ENCODE measurements at regions of chr5 and their contacts with region 1.

Region 1: DNA sequence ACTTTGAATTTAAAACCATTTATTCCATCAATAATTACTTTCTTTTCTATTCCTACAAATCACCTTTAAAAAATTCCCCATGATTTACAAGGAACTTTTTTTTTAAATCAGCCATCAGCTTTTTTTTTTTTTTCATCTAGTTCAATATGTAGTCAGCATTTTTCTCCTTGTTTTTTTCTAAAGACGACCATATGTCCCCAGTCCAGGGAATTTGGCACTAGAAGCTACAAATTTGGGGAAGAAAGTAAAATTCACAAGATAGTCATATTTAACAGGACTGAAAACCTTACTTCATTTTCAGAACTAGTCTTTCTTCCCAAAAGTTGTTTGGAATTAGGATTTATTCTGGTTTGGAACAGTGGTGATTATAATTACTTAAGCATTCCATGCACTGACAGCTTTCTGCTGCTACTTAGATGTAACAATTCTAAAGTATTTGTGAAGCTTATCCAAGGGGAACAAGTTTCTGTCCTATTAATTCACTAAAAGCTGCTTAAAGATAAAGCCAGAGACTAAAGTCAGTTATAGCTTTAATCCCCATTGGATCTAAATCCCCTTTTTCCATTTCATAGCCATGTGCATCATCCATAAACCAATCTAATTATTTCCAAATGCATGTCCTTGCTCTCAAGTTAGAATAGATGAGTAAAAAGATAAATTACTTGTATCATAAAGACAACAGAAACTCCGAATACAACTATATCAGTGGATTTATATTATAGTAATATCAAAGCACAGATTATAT is 7.4 kb upstream of the SNCAIP start:
- DNase-seq: no peak

Region 2: DNA sequence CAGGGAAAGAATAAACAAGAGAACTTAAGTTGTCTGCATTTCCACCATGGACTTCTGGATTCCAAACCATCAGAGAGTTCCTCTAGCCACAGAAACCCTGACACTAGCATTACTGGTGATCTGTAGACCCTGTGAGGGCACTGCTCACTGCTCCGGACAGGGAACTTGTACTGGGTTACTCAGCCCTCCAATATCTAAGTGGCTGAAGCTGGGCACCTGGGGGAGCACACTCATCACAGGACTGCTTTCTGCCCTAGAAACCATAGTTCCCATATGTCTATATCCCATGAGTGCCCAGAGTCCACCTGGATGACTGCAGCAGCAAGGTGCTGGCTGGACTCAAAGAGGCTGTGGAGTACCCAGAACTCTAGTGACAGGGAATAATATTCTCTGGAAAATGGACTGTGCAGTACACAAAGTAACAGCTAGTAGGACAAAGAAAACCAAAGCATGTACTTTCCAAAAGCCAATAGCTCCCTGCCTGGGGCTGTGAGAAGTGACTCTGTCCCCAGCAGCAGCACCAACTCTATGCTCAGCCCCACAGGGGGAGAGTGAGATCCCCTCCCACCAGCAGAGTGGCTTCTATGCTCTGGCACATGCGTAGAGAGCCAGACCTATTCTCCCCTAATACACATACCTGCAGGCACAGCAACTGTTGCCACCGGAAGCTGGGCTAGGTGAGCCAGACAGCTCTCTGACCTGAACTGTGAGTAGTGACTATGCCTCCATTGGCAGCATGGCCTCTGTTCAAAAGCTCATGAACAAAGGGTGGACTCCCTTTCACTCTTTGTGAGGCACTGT is 925.9 kb before region 1 on chr5:
- intact Hi-C with region 1: no loop called
- DNase-seq: no peak

Region 3: DNA sequence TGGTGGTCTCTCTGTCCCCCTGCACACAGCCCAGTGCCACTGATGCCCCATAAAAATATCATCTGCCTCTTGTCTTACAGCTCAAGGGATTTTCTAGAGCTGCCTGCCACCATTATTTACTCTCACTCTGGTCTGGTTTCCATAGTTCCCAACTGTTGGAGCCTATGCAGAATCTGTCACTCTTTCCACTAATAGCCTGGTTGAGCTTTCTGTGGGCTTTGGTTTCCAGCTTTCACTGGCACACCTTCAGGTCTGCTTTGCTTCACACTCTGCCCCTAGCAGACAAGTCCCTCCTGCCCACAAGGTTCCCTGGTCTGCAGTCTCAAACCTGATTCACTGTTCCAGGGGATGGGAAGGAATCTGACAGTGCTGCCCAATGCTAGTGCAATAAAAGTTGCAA is 556.0 kb before region 1 on chr5:
- intact Hi-C with region 1: loop called in 1 of 2 experiments (anchors 5 kb)
- DNase-seq: no peak

Region 4: DNA sequence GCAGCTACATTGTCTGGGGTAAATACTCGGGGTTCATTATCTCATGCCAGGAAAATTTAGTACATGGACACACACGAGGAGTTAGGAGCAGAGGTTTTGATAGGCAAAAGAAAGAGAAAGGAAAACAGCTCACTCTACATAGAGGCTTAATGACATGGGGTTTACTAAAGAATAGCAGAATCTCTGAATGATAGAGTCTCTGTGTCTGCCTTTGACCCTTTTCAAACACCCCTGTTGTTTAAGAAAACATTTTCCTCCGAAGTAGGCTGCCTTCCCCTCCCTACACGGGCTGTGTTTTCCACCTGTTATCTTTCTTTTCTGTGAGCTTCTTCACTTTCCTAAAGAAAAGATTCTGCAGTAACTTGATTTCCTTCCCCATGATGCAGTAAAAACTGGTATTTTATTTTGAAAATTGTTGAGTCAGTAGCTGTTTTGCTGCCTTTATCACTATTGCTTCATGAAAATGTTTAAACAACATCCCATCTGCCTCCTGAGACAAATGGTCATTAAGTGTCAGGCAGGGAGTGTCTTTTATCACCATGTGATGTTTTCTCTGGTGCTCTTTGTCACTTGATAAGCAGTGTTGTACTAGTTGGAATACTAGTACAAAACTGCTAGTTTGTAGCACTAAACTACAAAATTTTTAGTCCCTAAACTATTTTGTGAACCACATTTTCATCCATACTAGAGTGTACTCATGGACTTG is 655.2 kb after region 1 on chr5:
- intact Hi-C with region 1: no loop called
- DNase-seq: no peak